Posterior vena cava (tissue), 2 donors: ENCODE measurements at regions of chr12 and their contacts with region 1.

Region 1: GRCh38 chr12:46573347-46573658 is 200.7 kb upstream of the SLC38A2 start:
- DNase-seq: no peak

Region 2: DNA sequence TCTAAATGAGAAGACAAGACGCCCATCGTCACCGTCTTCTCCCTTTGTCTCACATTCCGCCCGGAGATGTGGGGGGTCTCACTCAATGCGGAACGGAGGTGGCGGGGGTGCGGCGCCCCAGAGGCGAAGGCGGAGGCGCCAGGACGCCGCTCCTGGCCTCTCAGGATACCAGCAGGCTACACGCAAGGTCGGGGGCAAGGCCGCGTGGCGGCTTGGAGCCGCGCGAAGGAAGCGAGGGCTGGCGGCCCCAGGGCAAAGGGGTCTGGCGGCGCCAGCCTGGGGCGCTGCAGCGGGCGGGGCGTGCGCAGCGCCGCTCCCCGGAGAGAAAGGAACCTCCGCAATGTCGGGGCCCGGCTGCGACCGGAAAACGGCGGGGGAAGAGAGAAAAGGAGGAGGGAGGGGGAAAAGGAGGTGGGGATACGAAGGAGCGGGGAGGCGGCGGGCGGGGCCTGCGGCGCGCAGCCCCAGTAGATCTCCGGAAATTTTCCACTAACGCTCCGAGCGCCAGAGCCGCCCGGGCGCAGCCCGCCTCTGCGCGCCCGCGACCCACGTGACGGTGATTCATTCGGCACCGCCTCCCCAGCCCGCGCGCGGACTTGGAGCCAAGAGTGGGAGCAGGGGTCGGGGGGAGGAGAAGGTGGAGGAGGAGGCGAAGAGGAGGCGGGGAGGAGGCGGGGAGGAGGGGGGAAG is 190.2 kb before region 1 on chr12:
- intact Hi-C with region 1: loop called in 1 of 2 experiments (anchors 10 kb)
- DNase-seq: peak; percentile 99

Region 3: GRCh38 chr12:46603781-46604456 is 30.6 kb after region 1 on chr12:
- intact Hi-C with region 1: no loop called
- DNase-seq: no peak

Region 4: DNA sequence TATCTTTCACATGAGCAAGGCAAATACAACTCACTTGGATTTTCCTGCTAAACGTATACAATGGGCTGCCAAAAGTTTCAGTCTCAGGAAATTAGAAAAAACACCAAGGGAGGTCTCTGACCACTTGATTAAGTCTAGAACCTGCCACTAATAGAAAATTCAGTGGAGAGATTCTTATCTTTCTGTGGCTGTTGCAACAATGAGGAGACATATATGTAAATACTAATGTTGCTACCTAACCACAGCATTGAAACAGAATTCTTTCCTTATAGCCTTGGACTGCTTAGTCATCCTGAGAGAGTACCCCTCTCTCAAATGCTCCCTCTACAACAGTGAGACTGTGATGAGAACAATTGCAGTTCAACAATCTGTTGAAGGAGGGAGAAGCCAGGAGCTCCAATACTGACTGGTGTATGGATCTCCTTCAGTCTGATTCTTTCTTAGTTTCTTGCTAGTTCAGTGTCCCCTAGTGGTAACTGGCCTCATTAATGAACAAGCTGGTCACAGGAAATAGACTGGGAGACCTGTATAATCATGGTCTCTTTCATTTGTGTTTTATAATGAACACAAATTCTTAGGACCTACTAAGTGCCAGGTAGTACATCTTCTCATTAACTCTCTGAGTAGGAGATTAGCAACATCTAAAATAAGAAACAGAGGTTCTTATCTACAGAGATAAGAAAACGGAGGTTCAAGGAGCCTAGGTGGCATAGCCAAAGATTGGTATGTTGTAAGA is 88.0 kb after region 1 on chr12:
- intact Hi-C with region 1: loop called in 1 of 2 experiments (anchors 10 kb)
- DNase-seq: no peak